Endothelial cell of umbilical vein (primary cell): ENCODE measurements at regions of chr10 and their contacts with region 1.

Region 1: DNA sequence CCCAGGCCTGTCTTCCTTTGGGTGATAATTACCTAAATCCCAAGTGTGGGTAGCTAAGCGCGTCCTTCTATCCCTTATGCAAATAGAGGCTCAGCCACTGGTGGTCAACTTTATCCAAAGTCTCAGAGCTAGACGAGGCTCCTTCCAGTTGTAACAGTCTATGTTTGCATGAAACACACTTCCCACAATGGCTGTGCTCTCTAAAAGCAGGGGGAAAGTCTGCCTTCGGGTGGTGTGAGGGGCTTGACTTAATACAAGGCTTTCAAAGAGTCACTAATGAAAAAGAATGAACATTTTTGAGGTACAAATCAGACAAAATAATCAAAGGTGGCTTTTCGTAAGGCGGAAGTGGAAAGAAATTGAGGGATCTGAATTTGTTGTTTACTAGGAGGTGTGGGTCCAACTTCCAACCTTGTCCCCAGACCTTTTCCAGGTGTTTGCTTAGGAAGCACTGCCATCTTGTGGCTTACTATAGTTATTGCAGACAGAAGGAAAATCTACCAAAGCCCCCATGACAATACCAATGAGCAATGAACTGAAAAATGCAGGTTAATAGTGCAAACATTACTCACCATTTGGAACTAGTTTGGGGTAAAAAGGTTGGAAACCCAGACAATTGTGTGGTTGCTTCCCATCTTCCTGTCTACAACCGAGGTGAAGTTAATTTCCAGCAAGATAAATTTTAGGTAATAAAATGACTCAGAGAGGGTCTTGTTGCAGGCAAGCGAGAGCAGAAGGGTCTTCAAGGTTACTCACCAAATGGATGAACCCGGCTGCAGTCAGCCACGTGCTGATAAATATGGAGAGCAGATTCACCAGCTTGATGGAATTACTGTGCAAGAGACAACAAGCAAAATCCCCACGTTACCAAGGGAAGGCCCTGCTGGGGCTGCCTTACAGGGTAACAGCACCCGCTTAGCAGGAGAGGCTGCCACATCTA is 525.7 kb downstream of the KCNMA1 start:
- DNase-seq: peak; percentile 82
- H3K4me3 ChIP-seq: no peak overlapping the region
- H3K27ac ChIP-seq: peak overlapping the region; percentile 58
- H3K4me1 ChIP-seq: peaks cover 6% of the 10 kb centered on the region
- H3K27me3 ChIP-seq: no peaks in the 10 kb centered on the region
- CTCF ChIP-seq: peak; percentile 68 to 71
- POLR2A ChIP-seq: no peak

Region 2: GRCh38 chr10:76984559-76985443 is 127.1 kb before region 1 on chr10:
- CTCF ChIA-PET with region 1: no interaction called
- POLR2A ChIA-PET with region 1: no interaction called
- dilution Hi-C with region 1: no loop called
- intact Hi-C with region 1: loop called (anchors 5 kb)
- DNase-seq: peak; percentile 68
- H3K4me3 ChIP-seq: no peak overlapping the region
- H3K27ac ChIP-seq: no peak overlapping the region
- H3K4me1 ChIP-seq: no peaks in the 10 kb centered on the region
- H3K27me3 ChIP-seq: no peaks in the 10 kb centered on the region
- CTCF ChIP-seq: peak; percentile 88 to 89
- POLR2A ChIP-seq: no peak

Region 3: DNA sequence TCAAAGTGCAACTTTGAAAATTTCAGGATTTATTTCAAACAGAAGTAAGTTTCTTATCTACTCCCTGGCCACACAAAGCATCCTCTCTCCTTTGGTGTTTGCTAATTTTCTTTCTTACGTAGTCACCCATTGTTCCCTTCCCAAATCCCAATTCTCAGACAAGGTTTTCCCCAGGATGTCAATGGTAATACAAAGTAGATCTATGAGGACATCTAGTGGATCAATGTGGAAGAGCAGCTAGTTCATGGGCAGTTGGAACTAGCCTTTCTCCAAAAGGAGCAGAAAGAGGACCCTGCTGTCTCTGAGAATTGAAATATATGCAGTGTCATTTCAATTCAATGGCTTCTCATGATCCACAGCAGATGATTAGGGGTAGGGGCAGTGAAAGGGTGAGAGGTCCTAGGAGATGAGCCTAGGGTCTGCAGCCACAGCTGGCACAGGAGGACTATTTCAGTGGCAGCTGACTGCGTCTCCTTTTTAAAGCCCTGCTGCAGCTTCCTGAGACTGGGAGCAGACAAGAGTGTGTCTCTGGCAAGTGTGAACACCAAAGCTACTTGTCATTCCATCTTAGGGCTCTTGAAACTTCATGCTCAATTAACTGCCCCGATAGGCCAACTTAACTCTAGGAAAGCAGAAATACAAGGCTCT is 106.8 kb before region 1 on chr10:
- CTCF ChIA-PET with region 1: interaction called, 3 read pairs
- POLR2A ChIA-PET with region 1: no interaction called
- dilution Hi-C with region 1: no loop called
- intact Hi-C with region 1: loop called (anchors 1 kb)
- DNase-seq: peak; percentile 49
- H3K4me3 ChIP-seq: no peak overlapping the region
- H3K27ac ChIP-seq: no peak overlapping the region
- H3K4me1 ChIP-seq: no peaks in the 10 kb centered on the region
- H3K27me3 ChIP-seq: peaks cover 4 to 5% of the 10 kb centered on the region in 2 experiments
- CTCF ChIP-seq: peak; percentile 53 to 66
- POLR2A ChIP-seq: no peak

Region 4: GRCh38 chr10:77036993-77037734 is 74.7 kb before region 1 on chr10:
- CTCF ChIA-PET with region 1: no interaction called
- POLR2A ChIA-PET with region 1: no interaction called
- dilution Hi-C with region 1: no loop called
- intact Hi-C with region 1: loop called (anchors 1 kb)
- DNase-seq: peak; percentile 25
- H3K4me3 ChIP-seq: no peak overlapping the region
- H3K27ac ChIP-seq: no peak overlapping the region
- H3K4me1 ChIP-seq: peaks cover 6% of the 10 kb centered on the region
- H3K27me3 ChIP-seq: no peaks in the 10 kb centered on the region
- CTCF ChIP-seq: peak; percentile 36 to 51
- POLR2A ChIP-seq: no peak

Region 5: DNA sequence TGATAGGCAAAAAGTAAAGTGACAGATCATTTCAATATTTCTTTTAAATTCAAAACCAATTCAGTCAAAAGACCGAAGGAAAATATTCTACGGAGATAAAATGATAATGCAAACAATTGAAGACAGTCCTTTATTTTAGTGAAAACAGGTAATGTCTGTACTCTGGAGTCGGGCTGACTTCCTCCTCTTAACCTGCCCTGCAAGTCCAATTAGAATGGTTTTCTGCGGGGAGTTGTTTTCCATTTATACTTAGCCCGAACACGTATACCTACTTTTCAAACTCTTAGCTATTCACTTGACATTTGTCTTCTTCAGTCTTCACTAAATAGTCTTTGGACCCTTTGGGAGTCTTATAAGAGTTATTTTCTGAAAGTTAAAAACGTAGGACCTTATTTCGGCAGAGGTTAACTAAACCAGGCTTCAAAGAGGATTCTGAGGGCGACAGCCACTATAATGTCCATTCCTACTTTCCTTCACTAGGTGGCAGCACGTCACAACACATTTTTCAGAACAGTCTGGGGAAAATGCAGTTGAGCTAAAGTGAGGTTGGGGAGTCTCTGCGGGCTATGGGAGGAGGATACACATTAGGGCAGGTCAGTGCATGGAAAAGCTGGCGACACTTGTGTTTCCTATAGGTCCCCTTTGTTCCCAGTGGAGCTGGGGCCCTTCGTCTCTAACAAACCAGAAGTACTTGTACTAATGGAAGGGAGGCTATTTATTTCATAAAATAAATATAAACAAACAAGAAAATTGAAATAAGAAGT is 53.7 kb after region 1 on chr10:
- CTCF ChIA-PET with region 1: interaction called, 4 read pairs
- POLR2A ChIA-PET with region 1: no interaction called
- dilution Hi-C with region 1: no loop called
- intact Hi-C with region 1: loop called (anchors 2 kb)
- DNase-seq: peak; percentile 77
- H3K4me3 ChIP-seq: no peak overlapping the region
- H3K27ac ChIP-seq: peak overlapping the region; percentile 80
- H3K4me1 ChIP-seq: peaks cover 41% of the 10 kb centered on the region
- H3K27me3 ChIP-seq: no peaks in the 10 kb centered on the region
- CTCF ChIP-seq: peak; percentile 59 to 66
- POLR2A ChIP-seq: no peak

Region 6: DNA sequence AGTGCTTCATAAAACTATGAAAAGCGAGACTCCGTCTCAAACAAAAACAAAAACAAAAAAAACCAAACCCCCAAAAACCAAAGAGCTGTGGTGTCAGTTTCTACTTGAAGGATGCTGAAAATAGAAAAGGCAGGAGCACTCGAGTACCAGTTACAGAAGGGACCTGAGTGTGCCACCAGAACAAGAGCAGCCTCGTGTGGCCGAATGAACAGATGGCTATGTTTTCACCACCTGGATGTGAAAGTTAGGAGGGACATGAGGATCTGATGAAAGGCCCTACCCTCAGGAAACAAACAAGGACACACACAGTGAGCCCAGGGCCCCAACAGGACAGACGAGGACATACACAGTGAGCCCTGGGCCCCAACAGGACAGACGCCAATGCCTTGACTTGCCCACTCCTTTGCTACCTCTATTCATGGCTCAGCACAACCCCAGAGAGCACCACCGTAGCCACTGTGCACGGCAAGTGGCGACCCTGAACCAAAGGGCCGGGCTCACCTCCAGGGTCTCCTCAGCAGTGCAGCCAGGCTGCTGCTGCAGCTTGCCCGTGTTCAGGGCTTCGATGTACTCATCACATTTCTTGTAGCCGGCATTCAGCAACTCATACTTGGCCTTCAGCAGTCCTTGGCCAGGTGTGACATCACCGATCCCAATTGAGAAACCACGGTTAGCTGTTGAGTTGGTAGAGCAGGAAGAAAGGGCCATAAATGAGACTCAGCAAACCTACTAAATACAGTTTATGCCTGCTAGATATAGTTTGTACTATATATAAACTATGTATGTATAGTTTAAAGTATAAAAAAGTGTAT is 892.5 kb after region 1 on chr10:
- CTCF ChIA-PET with region 1: no interaction called
- POLR2A ChIA-PET with region 1: no interaction called
- dilution Hi-C with region 1: no loop called
- intact Hi-C with region 1: no loop called
- DNase-seq: no peak
- H3K4me3 ChIP-seq: no peak overlapping the region
- H3K27ac ChIP-seq: no peak overlapping the region
- H3K4me1 ChIP-seq: no peaks in the 10 kb centered on the region
- H3K27me3 ChIP-seq: no peaks in the 10 kb centered on the region
- CTCF ChIP-seq: no peak
- POLR2A ChIP-seq: no peak